ENCODE measurements at regions of chr7 and their contacts with region 1.

Region 1: GRCh38 chr7:110704219-110704618 is 386.7 kb upstream of the LRRN3 start:
- DNase-seq: no peak
- ATAC-seq: no peak
- H3K4me3 ChIP-seq: no peak overlapping the region
- H3K27ac ChIP-seq: no peak overlapping the region
- H3K4me1 ChIP-seq: no peaks in the 10 kb centered on the region
- H3K27me3 ChIP-seq: no peaks in the 10 kb centered on the region
- CTCF ChIP-seq: no peak
- POLR2A ChIP-seq: no peak
- RAD21 ChIP-seq: no peak

Region 2: DNA sequence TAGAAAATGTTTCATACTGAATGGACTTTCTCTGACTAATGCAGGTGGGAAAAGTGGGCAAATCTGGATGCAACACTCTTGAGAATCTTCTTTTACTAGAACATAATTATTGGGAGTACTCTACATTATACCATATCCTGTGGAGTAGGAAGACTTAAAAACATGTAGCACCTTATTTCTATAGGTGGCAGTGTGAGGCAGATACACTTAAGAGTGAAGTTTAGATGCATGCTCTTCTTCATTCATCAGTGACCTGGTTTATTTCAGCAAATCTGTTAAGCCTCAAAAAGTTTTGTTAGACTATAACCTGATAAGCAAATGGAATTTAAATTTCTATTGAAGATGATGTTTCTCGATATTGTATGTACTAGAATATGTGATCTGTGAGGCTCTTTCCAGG is 700.4 kb before region 1 on chr7:
- CTCF ChIA-PET with region 1: no interaction called
- POLR2A ChIA-PET with region 1: no interaction called
- dilution Hi-C with region 1: no loop called
- in situ Hi-C with region 1: no loop called
- intact Hi-C with region 1: no loop called
- DNase-seq: no peak
- ATAC-seq: no peak
- H3K4me3 ChIP-seq: no peak overlapping the region
- H3K27ac ChIP-seq: no peak overlapping the region
- H3K4me1 ChIP-seq: no peaks in the 10 kb centered on the region
- H3K27me3 ChIP-seq: no peaks in the 10 kb centered on the region
- CTCF ChIP-seq: no peak
- POLR2A ChIP-seq: no peak
- RAD21 ChIP-seq: no peak

Region 3: GRCh38 chr7:110186331-110186730 is 517.9 kb before region 1 on chr7:
- CTCF ChIA-PET with region 1: no interaction called
- POLR2A ChIA-PET with region 1: no interaction called
- dilution Hi-C with region 1: no loop called
- in situ Hi-C with region 1: no loop called
- intact Hi-C with region 1: no loop called
- DNase-seq: no peak
- ATAC-seq: no peak
- H3K4me3 ChIP-seq: no peak overlapping the region
- H3K27ac ChIP-seq: no peak overlapping the region
- H3K4me1 ChIP-seq: no peaks in the 10 kb centered on the region
- H3K27me3 ChIP-seq: no peaks in the 10 kb centered on the region
- CTCF ChIP-seq: no peak
- POLR2A ChIP-seq: no peak
- RAD21 ChIP-seq: no peak

Region 4: DNA sequence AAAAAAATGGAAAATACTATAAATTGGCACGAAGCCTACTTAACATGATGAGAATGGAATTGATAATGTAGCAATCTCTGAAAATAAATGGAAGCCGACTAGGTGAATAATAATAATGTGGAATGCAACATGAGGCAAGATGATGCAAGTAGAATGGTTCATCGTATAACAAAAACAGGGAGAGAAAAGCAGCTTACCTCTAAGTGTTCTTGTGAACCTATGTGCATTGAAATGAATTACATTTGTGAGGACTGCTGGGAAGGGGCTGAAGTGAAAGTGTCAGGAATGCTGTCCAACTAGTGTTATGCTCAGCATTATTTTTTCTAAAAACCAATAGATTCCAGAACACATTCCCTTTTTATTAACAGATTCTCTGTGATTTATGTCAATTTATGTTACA is 53.9 kb before region 1 on chr7:
- CTCF ChIA-PET with region 1: no interaction called
- POLR2A ChIA-PET with region 1: no interaction called
- dilution Hi-C with region 1: no loop called
- in situ Hi-C with region 1: no loop called
- intact Hi-C with region 1: loop called (anchors 5 kb)
- DNase-seq: no peak
- ATAC-seq: no peak
- H3K4me3 ChIP-seq: no peak overlapping the region
- H3K27ac ChIP-seq: no peak overlapping the region
- H3K4me1 ChIP-seq: no peaks in the 10 kb centered on the region
- H3K27me3 ChIP-seq: no peaks in the 10 kb centered on the region
- CTCF ChIP-seq: no peak
- POLR2A ChIP-seq: no peak
- RAD21 ChIP-seq: no peak

Measured in IMR-90 (cell line).